ENCODE measurements at regions of chr3 and their contacts with region 1.

Region 1: GRCh38 chr3:39812537-39812936 is 3.1 kb downstream of the MYRIP start:
- DNase-seq: no peak
- ATAC-seq: no peak

Region 2: DNA sequence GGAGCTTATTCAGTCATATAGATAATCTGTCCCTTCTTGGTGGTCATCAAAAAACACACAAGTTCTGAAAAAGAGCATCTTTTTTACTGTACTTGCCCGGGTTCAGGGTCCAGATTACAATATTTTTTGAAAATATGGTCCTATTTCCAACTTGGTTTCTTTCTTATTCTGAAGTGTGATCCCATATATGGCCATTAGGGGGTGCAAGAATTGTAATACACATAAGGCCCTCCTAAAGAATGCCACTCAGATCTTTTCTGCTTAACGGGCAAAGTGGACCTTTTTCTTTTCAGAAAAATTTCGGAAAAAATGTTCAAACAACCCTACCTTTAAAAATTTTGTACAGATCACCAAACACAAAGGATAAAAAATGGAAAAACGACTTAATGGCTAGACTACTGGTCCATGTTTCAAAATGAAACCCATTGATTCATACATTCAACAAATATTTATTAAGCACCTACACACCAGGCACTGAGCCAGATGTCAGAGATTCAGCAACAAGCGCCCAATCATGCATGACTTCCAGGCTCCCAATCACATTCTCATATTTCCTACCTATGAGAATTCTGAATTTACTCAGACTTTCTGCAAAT is 105.1 kb before region 1 on chr3:
- intact Hi-C with region 1: no loop called
- DNase-seq: no peak
- ATAC-seq: no peak

Region 3: DNA sequence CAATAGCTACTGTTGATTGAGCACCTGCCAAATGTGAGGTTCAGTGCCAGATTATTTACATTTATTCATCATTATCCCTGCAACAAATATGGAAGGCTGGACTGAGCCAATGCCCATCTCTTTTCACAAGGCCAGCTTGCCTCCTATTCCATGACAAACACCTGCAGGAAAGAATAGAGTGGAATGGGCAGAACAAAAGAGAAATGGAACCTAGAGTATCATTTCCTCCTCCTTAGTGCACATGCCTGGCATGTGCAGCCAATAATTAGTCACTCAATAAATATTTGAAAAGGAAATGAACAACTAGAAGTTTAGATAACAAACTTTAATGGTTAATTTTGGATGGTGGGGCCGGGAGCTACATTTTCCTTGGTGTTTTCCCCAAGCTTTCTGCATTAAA is 64.5 kb before region 1 on chr3:
- intact Hi-C with region 1: no loop called
- DNase-seq: no peak
- ATAC-seq: no peak

Region 4: DNA sequence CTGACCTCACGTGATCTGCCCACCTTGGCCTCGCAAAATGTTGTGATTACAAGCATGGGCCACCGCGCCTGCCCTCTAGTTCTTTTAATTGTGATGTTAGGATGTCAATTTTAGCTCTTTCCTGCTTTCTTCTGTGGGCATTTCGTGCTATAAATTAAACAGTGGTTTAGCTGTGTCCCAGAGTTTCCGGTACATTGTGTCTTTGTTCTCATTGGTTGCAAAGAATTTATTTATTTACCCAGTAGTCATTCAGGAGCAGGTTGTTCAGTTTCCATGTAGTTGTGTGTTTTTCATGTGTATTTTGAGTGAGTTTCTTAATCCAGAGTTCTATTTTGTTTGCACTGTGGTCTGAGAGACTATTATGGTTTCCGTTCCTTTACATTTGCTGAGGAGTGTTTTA is 26.9 kb after region 1 on chr3:
- intact Hi-C with region 1: no loop called
- DNase-seq: no peak
- ATAC-seq: no peak

Region 5: DNA sequence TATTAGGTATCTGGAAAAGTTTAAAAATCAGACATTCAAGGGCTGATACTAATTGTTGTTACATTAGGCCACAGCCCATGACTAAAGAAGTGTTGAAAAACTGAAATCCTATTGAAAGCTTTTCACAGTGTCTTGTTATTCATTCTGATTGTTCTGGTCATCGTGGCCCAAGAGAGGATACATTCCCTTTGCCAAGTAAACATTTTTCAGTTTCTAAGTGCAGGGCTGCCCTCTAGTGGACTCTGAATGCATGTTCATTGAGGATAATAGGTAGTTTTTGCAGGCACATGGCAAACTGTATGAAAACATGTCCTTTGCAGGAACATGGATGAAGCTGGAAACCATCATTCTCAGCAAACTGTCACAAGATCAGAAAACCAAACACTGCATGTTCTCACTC is 178.0 kb after region 1 on chr3:
- intact Hi-C with region 1: loop called (anchors 10 kb)
- DNase-seq: no peak
- ATAC-seq: no peak

Measured in Right ventricle myocardium inferior (tissue), 1 donor.